Breast epithelium (tissue), 4 donors: ENCODE measurements at regions of chr4 and their contacts with region 1.

Region 1: GRCh38 chr4:165537028-165537648 is 158.3 kb downstream of the CPE start:
- DNase-seq: no peak
- H3K4me3 ChIP-seq: no peak overlapping the region
- H3K27ac ChIP-seq: no peak overlapping the region
- H3K4me1 ChIP-seq: no peaks in the 10 kb centered on the region
- H3K27me3 ChIP-seq: no peaks in the 10 kb centered on the region
- CTCF ChIP-seq: peak; percentile 56 to 71 (median 68)
- POLR2A ChIP-seq: no peak

Region 2: DNA sequence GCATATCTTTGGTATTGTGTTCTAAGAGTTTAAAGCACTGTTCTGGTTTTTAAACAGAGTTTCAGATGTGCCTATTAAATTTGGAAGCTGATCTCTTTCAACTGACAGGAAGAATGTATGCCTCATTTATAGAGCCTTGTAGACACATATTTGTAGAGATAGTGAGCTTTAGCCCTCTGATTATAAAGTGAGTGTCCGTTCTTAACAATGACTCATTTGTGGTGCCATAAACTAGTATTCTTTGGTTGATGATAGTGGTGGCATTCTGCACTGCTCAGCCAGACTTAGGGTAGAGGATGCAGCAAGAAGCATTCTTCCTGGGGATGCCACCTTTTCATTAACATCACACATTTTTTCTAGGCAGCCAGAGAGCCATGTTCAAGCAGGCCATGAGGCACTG is 457.6 kb after region 1 on chr4:
- intact Hi-C with region 1: no loop called
- DNase-seq: no peak
- H3K4me3 ChIP-seq: no peak overlapping the region
- H3K27ac ChIP-seq: no peak overlapping the region
- H3K4me1 ChIP-seq: no peaks in the 10 kb centered on the region
- H3K27me3 ChIP-seq: no peaks in the 10 kb centered on the region
- CTCF ChIP-seq: no peak
- POLR2A ChIP-seq: no peak

Region 3: GRCh38 chr4:166088576-166088975 is 551.4 kb after region 1 on chr4:
- intact Hi-C with region 1: loop called (anchors 10 kb)
- DNase-seq: no peak
- H3K4me3 ChIP-seq: no peak overlapping the region
- H3K27ac ChIP-seq: no peak overlapping the region
- H3K4me1 ChIP-seq: no peaks in the 10 kb centered on the region
- H3K27me3 ChIP-seq: no peaks in the 10 kb centered on the region
- CTCF ChIP-seq: no peak
- POLR2A ChIP-seq: no peak